MCF 10A (cell line): ENCODE measurements at regions of chr10 and their contacts with region 1.

Region 1: DNA sequence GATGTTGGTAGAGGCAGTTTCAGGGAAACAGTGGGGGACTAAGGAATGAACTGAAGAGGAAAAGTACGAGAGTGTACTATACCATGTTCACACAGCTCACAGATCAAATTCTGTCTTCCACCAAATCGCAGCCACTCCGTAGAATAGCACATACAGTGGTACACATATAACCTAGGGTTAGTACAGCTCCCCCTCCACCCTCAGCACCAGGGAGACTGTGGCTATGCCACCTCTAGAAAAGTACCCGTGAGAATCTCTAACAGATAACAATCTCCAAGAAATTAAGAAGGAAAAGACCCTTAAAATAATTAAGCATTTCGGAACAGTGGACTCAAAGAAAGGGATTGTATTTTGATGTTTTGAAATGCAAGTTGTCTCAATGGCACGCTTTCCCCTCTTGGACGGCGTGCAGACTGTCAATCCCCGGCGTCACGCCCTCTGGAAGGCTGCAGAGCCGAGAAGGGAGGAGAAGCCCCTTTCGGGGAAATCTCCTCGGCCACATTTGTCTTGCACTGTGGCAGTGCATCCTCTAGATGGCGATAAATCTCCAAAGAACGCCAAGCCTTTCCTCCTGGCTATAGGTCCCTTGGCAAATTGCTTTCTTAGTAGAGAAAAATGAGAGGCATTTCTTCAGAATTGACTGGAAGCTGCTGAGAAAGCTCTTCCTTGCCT is 345.0 kb downstream of the REEP3 start:
- DNase-seq: peak; percentile 64
- H3K4me3 Mint-ChIP-seq: peak overlapping the region; percentile 20
- H3K27ac Mint-ChIP-seq: no peak overlapping the region
- H3K4me1 Mint-ChIP-seq: peaks cover 12% of the 10 kb centered on the region
- H3K27me3 Mint-ChIP-seq: peaks cover 44% of the 10 kb centered on the region
- CTCF ChIP-seq: peak; percentile 57

Region 2: GRCh38 chr10:63878428-63878827 is 12.2 kb after region 1 on chr10:
- CTCF ChIA-PET with region 1: interaction called, 23 read pairs
- POLR2A ChIA-PET with region 1: no interaction called
- intact Hi-C with region 1: no loop called
- DNase-seq: no peak
- H3K4me3 Mint-ChIP-seq: no peak overlapping the region
- H3K27ac Mint-ChIP-seq: no peak overlapping the region
- H3K4me1 Mint-ChIP-seq: no peaks in the 10 kb centered on the region
- H3K27me3 Mint-ChIP-seq: no peaks in the 10 kb centered on the region
- CTCF ChIP-seq: no peak

Region 3: GRCh38 chr10:63885156-63885555 is 18.9 kb after region 1 on chr10:
- CTCF ChIA-PET with region 1: interaction called, 12 read pairs
- POLR2A ChIA-PET with region 1: no interaction called
- intact Hi-C with region 1: no loop called
- DNase-seq: peak; percentile 29
- H3K4me3 Mint-ChIP-seq: no peak overlapping the region
- H3K27ac Mint-ChIP-seq: no peak overlapping the region
- H3K4me1 Mint-ChIP-seq: no peaks in the 10 kb centered on the region
- H3K27me3 Mint-ChIP-seq: peaks cover 23% of the 10 kb centered on the region
- CTCF ChIP-seq: no peak

Region 4: DNA sequence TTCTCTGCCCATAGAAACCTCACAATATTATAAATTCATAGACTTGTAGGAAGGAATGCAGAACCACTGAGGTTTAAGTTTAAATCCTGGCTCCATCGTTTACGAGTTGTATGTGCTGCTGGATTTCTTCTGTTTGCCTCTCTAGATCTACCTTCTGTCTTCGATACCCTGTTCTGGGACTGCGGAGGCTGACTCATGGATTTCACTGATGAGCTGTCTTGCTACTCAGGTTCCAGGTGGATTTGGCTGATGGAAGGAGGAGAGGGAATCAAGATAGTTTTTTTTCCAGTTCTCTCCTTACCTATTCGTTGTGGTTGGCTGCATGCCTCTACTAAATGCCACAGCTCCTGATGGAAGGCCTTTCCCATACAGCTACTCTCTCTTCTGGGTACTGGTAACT is 30.8 kb after region 1 on chr10:
- CTCF ChIA-PET with region 1: interaction called, 10 read pairs
- POLR2A ChIA-PET with region 1: interaction called, 3 read pairs
- intact Hi-C with region 1: no loop called
- DNase-seq: no peak
- H3K4me3 Mint-ChIP-seq: no peak overlapping the region
- H3K27ac Mint-ChIP-seq: no peak overlapping the region
- H3K4me1 Mint-ChIP-seq: no peaks in the 10 kb centered on the region
- H3K27me3 Mint-ChIP-seq: peaks cover 12% of the 10 kb centered on the region
- CTCF ChIP-seq: no peak

Region 5: DNA sequence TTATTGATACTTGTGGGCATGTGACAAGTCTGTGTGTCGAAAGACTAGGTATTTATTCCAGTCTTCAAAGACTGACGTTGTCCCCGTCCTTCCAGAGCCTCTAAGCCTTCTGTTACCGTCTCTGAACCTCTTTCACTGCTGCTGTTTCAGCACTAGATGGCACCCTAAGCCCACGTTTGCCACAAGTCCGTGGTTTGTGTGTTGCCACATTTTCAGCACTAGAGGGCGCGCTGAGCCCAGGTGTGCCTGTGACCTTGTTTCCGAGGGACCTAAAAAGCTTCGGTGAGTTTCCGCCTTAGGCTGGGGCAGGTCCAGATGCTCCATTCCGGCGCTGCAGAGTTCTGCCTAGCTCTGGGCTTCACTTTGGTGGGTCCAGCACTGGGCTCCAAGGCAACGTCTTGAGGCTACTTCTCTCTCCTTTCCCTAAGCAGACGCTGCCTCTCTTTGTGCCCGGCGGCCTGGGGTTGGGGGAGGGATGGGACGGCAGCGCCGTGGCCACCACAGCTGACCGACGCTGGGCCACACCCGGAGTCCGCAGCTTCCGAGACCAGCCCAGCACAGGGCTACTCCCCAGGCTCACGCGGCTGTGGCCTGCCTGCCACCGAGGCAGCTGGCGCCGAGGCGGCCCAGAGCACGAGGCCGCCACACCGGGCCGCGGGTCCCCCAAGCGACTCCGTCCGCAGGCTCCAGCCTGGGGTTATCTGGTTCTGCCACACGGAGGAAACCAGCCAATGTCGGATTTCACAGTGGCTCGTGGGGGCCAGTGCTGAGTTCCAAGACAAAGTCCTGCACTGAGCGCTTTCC is 175.2 kb after region 1 on chr10:
- CTCF ChIA-PET with region 1: interaction called, 11 read pairs
- POLR2A ChIA-PET with region 1: no interaction called
- intact Hi-C with region 1: no loop called
- DNase-seq: peak; percentile 77
- H3K4me3 Mint-ChIP-seq: peak overlapping the region; percentile 50
- H3K27ac Mint-ChIP-seq: no peak overlapping the region
- H3K4me1 Mint-ChIP-seq: peaks cover 8% of the 10 kb centered on the region
- H3K27me3 Mint-ChIP-seq: no peaks in the 10 kb centered on the region
- CTCF ChIP-seq: peak; percentile 100